ENCODE measurements at regions of chr11 and their contacts with region 1.

Region 1: GRCh38 chr11:118406599-118407166 is 5.3 kb downstream of the ATP5MG start:
- DNase-seq: no peak
- H3K4me3 ChIP-seq: no peak overlapping the region
- H3K4me3 Mint-ChIP-seq: peak overlapping the region in 1 of 7 donors; percentile 51
- H3K27ac ChIP-seq: no peak overlapping the region
- H3K27ac Mint-ChIP-seq: peak overlapping the region in 4 of 8 donors; percentile 36 to 80 (median 78)
- H3K4me1 ChIP-seq: peaks cover 31% of the 10 kb centered on the region
- H3K4me1 Mint-ChIP-seq: peaks cover 50 to 75% (median 71%) of the 10 kb centered on the region in 3 donors
- H3K27me3 ChIP-seq: no peaks in the 10 kb centered on the region
- H3K27me3 Mint-ChIP-seq: no peaks in the 10 kb centered on the region

Region 2: GRCh38 chr11:118334745-118335144 is 71.9 kb before region 1 on chr11:
- CTCF ChIA-PET with region 1: no interaction called
- POLR2A ChIA-PET with region 1: no interaction called
- DNase-seq: peak in 1 of 5 donors; percentile 57
- H3K4me3 ChIP-seq: peak overlapping the region; percentile 44
- H3K4me3 Mint-ChIP-seq: peak overlapping the region; percentile 2 to 65 (median 25)
- H3K27ac ChIP-seq: no peak overlapping the region
- H3K27ac Mint-ChIP-seq: peak overlapping the region; percentile 70 to 97 (median 86)
- H3K4me1 ChIP-seq: peaks cover 59% of the 10 kb centered on the region
- H3K4me1 Mint-ChIP-seq: peaks cover 41 to 64% (median 56%) of the 10 kb centered on the region in 3 donors
- H3K27me3 ChIP-seq: no peaks in the 10 kb centered on the region
- H3K27me3 Mint-ChIP-seq: peaks cover 0 to 4% of the 10 kb centered on the region in 2 donors

Region 3: GRCh38 chr11:118462178-118462577 is 55.5 kb after region 1 on chr11:
- CTCF ChIA-PET with region 1: interaction called, 3 read pairs
- POLR2A ChIA-PET with region 1: interaction called, 10 read pairs
- DNase-seq: no peak
- H3K4me3 ChIP-seq: no peak overlapping the region
- H3K4me3 Mint-ChIP-seq: no peak overlapping the region
- H3K27ac ChIP-seq: no peak overlapping the region
- H3K27ac Mint-ChIP-seq: no peak overlapping the region
- H3K4me1 ChIP-seq: peaks cover 5% of the 10 kb centered on the region
- H3K4me1 Mint-ChIP-seq: peaks cover 42 to 75% (median 49%) of the 10 kb centered on the region in 3 donors
- H3K27me3 ChIP-seq: no peaks in the 10 kb centered on the region
- H3K27me3 Mint-ChIP-seq: no peaks in the 10 kb centered on the region

Measured in CD8-positive, alpha-beta memory T cell (primary cell).